ENCODE measurements at regions of chr17 and their contacts with region 1.

Region 1: DNA sequence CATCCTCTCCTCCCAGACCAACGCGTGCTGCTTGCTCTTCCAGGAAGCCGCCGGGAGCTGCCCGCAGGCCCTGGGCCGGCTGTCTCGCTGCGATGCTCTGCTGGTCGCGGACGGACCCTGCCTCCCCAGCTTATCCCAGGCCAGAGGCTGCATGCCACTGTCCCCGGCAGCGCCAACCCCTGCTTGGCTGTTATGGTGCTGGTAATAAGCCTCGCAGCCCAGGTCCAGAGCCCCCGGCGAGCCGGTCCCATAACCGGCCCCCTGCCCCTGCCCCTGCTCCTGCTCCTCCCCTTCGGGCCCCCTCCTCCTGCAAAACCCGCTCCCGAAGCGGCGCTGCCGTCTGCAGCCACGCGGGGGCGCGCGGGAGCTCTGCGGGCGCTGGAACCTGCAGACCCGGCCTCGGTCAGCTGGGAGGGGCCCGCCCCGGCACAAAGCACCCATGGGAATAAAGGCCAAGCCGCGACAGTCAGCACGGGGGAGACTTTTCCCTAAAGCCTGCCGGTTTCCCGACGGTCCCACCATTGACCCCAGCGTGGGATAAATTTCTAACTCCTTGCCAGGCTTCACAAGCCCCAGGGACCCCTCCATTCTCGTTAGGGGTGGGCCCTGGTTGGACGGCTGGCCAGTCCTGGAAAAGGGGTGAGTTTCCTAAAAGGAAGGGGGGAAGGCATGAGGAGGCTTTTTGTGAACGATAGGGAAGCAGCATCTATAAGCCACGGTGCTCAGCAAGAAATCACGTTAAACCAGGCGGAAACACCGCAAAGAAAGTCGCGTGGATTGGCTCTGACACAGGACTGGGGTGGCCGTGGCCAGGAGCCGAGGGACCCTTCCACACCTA is 11.2 kb downstream of the ENPP7 start:
- DNase-seq: peak; percentile 69 to 93
- ATAC-seq: peak; percentile 68 to 85
- H3K4me3 ChIP-seq: peak overlapping the region; percentile 36; the same call in 2 of the 3 replicates
- H3K27ac ChIP-seq: peak overlapping the region; percentile 51 to 74; a peak in 5 of 6 replicates
- H3K4me1 ChIP-seq: peaks cover 18% of the 10 kb centered on the region; the same call in 2 of the 3 replicates
- CTCF ChIP-seq: peak; percentile 97
- EP300 ChIP-seq: no peak
- POLR2A ChIP-seq: no peak
- RAD21 ChIP-seq: peak; percentile 72 to 85

Region 2: GRCh38 chr17:79678091-79678735 is 63.8 kb before region 1 on chr17:
- CTCF ChIA-PET with region 1: no interaction called
- POLR2A ChIA-PET with region 1: no interaction called
- DNase-seq: no peak
- ATAC-seq: no peak
- H3K4me3 ChIP-seq: no peak overlapping the region
- H3K27ac ChIP-seq: no peak overlapping the region
- H3K4me1 ChIP-seq: no peaks in the 10 kb centered on the region; the same call in 2 of the 3 replicates
- CTCF ChIP-seq: no peak
- EP300 ChIP-seq: no peak
- POLR2A ChIP-seq: no peak
- RAD21 ChIP-seq: no peak

Region 3: DNA sequence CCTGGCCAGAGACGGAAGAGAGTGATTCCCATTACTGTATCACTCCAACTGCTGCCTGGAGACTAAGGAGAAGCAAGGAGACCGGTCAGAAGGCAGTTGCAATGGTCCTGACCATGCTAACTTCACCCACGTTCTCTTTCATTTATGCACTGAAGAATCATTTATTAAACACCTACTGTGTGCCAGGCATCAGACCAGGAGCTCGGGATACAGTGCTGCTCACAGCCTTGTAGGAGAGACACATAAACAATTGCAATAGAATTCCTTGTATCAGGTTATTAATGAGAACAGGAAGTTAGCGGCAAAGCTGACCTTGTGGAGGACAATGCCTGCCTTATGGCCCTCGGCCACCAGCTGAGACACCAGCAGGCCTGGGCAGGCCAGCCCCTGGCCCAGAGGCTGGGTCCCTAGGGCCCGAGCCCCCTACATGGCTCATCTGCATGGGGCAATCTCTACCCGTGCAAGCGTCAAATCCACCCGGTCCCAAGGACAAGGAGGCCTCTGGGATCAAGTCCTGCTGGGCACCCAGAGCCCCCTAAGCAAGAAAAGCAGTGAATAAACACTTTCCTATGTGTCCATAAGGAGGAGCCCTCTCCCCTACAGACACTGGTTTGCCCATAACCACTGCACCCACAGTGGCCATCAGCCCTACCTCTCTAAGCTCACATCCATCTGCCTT is 19.8 kb before region 1 on chr17:
- CTCF ChIA-PET with region 1: interaction called, 22 read pairs
- POLR2A ChIA-PET with region 1: no interaction called
- DNase-seq: peak; percentile 67 to 87
- ATAC-seq: peak; percentile 84 to 95
- H3K4me3 ChIP-seq: no peak overlapping the region
- H3K27ac ChIP-seq: no peak overlapping the region
- H3K4me1 ChIP-seq: no peaks in the 10 kb centered on the region
- CTCF ChIP-seq: peak; percentile 50
- EP300 ChIP-seq: no peak
- POLR2A ChIP-seq: no peak
- RAD21 ChIP-seq: peak; percentile 53 to 70; a peak in 4 of 5 replicates

Region 4: GRCh38 chr17:79728226-79728907 is 13.6 kb before region 1 on chr17:
- CTCF ChIA-PET with region 1: interaction called, 22 read pairs
- POLR2A ChIA-PET with region 1: no interaction called
- DNase-seq: peak; percentile 95 to 100
- ATAC-seq: peak; percentile 78 to 93
- H3K4me3 ChIP-seq: no peak overlapping the region
- H3K27ac ChIP-seq: peak overlapping the region; percentile 64 to 74
- H3K4me1 ChIP-seq: no peaks in the 10 kb centered on the region
- CTCF ChIP-seq: no peak
- EP300 ChIP-seq: no peak
- POLR2A ChIP-seq: no peak
- RAD21 ChIP-seq: no peak

Region 5: DNA sequence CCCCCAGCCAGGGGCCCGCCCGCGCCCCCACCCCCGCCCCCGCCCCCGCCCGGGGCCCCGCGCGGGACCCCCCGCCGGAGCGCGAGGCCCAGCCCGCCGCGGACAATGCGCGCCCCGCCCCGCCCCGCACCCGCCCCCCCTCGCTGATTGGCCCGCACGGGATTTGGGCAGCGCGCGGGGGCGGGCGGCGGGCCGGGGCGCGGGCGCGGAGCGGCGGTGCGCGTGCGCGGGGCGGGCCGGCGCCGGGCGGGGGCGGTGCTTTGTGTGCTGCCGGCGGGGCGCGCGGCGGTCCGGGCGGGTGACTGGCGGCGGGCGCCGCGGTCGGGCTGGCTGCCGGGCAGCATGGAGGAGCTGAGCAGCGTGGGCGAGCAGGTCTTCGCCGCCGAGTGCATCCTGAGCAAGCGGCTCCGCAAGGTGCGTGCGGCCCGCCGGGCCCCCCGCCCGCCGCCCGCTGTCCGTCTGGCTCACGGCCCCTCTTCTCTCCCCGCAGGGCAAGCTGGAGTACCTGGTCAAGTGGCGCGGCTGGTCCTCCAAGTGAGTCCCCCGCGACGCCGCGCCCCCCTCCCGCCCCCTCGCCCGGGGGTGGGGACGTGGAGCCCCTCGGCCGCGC is 36.0 kb after region 1 on chr17 and contains the start of gene CBX2:
- CTCF ChIA-PET with region 1: interaction called, 254 read pairs
- POLR2A ChIA-PET with region 1: interaction called, 3 read pairs
- DNase-seq: peak; percentile 75 to 92
- ATAC-seq: peak; percentile 64 to 72
- H3K4me3 ChIP-seq: peak within 1 kb of the TSS; percentile 93
- H3K27ac ChIP-seq: peak within 1 kb of the TSS; percentile 91 to 98
- H3K4me1 ChIP-seq: peaks cover 21% of the 10 kb centered on the region
- CTCF ChIP-seq: no peak
- EP300 ChIP-seq: no peak
- POLR2A ChIP-seq: peak; percentile 93
- RAD21 ChIP-seq: no peak
- polyA plus RNA-seq, gene CBX2: 7.4 and 8.2 TPM in 2 replicates